Activated T-helper 2 cell treated with anti-CD3 and anti-CD28 coated beads, Interferon-gamma antibody, Interleukin-2, Interleukin-4, amounts not matched to agents 10 μg/mL and 5 μg/mL and 100 μg/mL, durations not matched to agents 14 hours and 24 hours and 36 hours (primary cell): ENCODE measurements at regions of chr11 and their contacts with region 1.

Region 1: DNA sequence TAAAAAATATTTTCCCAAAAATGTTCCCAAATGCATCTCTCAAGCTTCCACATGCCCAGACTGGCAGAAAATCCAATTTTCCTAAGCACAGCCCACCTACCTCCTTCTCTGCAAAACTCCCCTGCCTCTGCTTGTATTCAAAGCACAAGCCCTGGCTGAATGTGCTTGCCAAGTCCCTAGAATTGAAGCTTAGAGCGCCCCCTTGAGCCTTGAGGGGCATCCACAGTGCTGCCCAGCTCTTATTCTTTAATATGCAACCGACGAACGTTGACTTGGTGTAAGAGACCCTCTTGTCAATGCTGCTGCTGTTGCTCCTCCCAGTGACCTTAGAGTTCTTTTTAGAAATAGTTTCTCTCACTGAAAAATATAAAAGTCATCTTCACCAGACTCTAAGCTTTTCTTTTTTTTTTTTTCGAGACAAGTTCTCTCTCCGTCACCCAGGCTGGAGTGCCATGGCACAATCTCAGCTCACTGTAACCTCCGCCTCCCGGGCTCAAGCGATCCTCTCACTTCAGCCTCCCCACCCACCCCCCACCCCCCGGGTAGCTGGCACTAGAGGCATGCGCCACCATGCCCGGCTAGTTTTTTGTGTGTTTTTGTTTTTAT is 63.5 kb upstream of the CAPRIN1 start:
- DNase-seq: peak; percentile 54
- H3K4me3 Mint-ChIP-seq: no peak overlapping the region
- H3K27ac Mint-ChIP-seq: no peak overlapping the region
- H3K4me1 Mint-ChIP-seq: peaks cover 5% of the 10 kb centered on the region
- H3K27me3 Mint-ChIP-seq: peaks cover 3% of the 10 kb centered on the region

Region 2: GRCh38 chr11:33808228-33808828 is 179.8 kb before region 1 on chr11:
- intact Hi-C with region 1: loop called (anchors 1 kb)
- DNase-seq: peak; percentile 64
- H3K4me3 Mint-ChIP-seq: no peak overlapping the region
- H3K27ac Mint-ChIP-seq: no peak overlapping the region
- H3K4me1 Mint-ChIP-seq: no peaks in the 10 kb centered on the region
- H3K27me3 Mint-ChIP-seq: peaks cover 35% of the 10 kb centered on the region

Region 3: GRCh38 chr11:34114471-34114870 is 126.4 kb after region 1 on chr11:
- intact Hi-C with region 1: no loop called
- DNase-seq: no peak
- H3K4me3 Mint-ChIP-seq: no peak overlapping the region
- H3K27ac Mint-ChIP-seq: no peak overlapping the region
- H3K4me1 Mint-ChIP-seq: peaks cover under 1% of the 10 kb centered on the region
- H3K27me3 Mint-ChIP-seq: no peaks in the 10 kb centered on the region